PC-9 (cell line): ENCODE measurements at regions of chr14 and their contacts with region 1.

Region 1: DNA sequence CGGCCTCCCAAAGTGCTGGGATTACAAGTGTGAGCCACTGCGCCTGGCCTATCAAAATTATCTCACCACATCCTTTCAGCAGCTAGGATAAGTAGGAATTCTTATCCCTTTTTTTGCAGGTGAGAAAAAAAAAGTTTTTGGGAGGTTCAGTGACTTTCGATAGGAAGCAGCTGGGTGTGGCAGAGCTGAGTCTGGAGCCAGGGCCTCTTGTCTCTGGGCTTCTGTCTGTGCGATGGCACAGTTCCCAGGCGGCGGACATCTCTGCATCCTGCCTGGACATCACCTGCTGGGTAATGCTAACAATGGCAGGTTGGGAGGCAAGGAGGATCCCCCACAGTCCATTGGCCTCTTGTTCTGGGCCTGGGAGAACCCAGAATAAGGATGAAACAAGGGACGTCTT is 12.5 kb downstream of the NRXN3 start:
- DNase-seq: no peak
- H3K4me3 ChIP-seq: no peak overlapping the region
- H3K27ac ChIP-seq: no peak overlapping the region
- H3K4me1 ChIP-seq: no peaks in the 10 kb centered on the region
- H3K27me3 ChIP-seq: peaks cover 80% of the 10 kb centered on the region
- CTCF ChIP-seq: no peak

Region 2: DNA sequence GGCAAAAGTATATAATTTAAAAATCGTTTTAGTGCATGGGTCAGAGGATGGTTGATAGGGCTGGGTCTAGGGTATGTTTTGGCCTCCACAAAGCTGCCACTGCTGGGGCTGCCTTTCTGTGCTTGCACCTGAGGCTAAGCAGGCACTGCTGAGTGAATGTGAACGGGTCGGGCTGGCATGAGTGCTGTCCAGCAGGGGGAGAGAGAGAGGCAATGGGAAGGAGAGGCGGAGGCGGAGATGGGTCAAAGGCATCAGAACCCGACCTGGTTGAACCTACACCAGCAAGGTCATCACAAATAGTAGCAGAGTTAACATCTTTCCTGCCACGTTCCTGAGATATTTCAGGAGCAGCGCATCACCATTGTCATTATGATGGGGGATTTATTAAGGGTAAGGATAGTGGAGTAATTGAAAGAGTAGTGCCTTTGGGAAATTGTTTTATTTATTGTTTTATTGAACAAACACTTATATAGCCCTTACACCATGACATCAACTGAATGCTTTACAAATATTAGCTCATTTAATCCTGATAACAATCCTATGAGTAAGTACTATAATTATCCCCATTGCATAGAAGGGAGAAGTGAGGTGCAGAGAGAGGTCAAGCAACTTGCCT is 18.4 kb before region 1 on chr14:
- CTCF ChIA-PET with region 1: no interaction called
- POLR2A ChIA-PET with region 1: interaction called, 16 read pairs
- intact Hi-C with region 1: no loop called
- DNase-seq: peak in 1 of 2 experiments; percentile 25
- H3K4me3 ChIP-seq: no peak overlapping the region
- H3K27ac ChIP-seq: no peak overlapping the region
- H3K4me1 ChIP-seq: no peaks in the 10 kb centered on the region
- H3K27me3 ChIP-seq: peaks cover 52% of the 10 kb centered on the region
- CTCF ChIP-seq: peak; percentile 63